GM13977 (cell line): ENCODE measurements at regions of chr3 and their contacts with region 1.

Region 1: GRCh38 chr3:22555753-22556435 is 647.2 kb upstream of the UBE2E2 start:
- DNase-seq: no peak
- CTCF ChIP-seq: no peak

Region 2: DNA sequence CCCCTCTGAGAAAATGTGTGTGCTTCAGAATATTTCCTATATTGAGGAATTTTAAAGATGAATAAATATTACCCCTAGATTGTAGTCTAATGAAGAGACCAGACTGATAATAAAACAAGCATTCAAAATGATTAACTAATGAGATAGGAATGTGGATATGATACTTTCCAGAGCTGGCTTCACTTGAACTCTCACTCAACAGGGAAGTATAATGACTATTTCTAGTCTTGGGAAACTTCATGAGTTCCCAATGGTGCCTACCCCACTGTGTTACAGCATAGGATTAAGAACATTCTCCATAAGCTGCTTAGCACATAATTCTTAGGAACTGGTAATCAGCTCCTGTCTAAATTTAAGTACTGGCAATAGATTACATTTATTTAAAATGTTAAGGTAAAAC is 543.4 kb before region 1 on chr3:
- in situ Hi-C with region 1: no loop called
- DNase-seq: no peak
- CTCF ChIP-seq: no peak

Region 3: DNA sequence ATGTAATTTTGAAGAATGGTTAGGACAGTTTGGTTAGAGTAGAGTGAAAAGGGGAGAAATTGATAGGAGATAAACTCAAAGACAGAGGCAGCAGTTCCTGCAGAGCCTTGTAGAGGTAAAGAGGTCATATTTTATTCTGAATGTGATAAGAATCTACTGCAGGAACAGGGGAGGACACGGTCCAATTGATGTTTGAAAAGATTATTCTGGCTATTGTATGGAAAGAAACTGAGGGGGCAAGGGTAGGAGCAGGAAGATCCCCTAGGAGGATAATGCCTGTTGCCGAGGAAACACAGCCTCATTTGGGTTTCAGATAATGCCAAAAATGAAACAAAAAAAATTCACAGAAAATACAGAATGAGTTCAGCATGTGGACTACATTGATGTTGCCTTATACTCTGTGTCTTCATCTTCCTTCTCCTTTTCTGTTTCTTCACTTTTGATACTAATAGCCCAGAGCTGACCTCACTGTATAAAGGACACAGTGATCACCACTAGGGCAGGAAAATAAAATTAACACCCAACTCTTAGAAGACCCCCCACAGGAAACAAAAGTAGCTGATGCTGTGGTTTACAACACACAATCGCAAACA is 192.7 kb after region 1 on chr3:
- in situ Hi-C with region 1: no loop called
- DNase-seq: no peak
- CTCF ChIP-seq: no peak

Region 4: GRCh38 chr3:22960105-22960984 is 404.5 kb after region 1 on chr3:
- in situ Hi-C with region 1: loop called (anchors 25 kb)
- DNase-seq: peak; percentile 21
- CTCF ChIP-seq: peak; percentile 79